Activated T-helper 2 cell treated with anti-CD3 and anti-CD28 coated beads, Interferon-gamma antibody, Interleukin-2, Interleukin-4, amounts not matched to agents 10 μg/mL and 5 μg/mL and 100 μg/mL, durations not matched to agents 14 hours and 24 hours and 36 hours (primary cell): ENCODE measurements at regions of chr10 and their contacts with region 1.

Region 1: DNA sequence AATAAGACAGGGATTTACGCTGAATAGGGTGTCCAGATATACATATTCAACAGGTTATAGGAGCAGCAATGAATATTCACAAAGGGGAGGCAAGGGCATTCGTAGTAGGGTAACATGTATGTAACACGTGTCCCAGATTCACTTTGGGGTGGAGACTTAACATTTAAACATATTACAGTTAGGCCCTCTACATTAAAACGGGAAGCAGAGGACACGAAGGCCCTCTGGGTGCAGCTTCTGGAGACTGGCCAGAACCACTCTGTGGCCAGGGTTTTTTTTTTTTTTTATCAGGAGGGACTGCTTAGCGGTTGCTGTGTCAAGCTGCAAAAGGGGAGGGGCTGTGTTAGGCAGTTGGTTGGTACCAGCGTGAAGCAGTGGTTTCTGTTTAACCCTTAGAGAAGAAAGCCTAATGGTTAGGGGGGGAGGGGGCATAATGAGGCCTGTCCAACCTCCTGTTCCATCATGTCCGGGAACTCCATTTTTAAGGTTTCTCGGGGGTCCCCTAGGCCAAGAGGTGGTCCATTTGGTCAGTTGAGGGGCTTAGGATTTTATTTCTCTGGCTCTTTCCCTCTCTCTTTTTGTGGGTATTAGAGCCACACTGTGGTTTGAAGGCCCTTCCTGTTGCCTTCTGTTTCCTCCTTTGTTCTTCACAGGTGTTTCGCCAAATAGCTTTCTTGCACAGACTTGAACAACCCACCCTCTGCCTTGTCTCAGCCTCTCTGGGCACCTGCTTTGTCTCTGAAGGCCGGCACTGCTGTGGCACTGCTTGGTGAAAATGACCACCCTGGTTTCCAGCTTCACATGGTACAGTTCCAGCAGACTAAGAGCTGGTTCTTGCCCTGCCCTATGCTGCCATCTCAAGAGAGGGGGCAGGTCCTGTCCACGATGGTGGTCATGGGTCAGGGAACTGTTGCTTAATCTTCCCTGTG is 26.4 kb downstream of the PRF1 start:
- DNase-seq: no peak
- H3K4me3 Mint-ChIP-seq: no peak overlapping the region
- H3K27ac Mint-ChIP-seq: peak overlapping the region; percentile 93
- H3K4me1 Mint-ChIP-seq: peaks cover 47% of the 10 kb centered on the region
- H3K27me3 Mint-ChIP-seq: peaks cover 7% of the 10 kb centered on the region

Region 2: DNA sequence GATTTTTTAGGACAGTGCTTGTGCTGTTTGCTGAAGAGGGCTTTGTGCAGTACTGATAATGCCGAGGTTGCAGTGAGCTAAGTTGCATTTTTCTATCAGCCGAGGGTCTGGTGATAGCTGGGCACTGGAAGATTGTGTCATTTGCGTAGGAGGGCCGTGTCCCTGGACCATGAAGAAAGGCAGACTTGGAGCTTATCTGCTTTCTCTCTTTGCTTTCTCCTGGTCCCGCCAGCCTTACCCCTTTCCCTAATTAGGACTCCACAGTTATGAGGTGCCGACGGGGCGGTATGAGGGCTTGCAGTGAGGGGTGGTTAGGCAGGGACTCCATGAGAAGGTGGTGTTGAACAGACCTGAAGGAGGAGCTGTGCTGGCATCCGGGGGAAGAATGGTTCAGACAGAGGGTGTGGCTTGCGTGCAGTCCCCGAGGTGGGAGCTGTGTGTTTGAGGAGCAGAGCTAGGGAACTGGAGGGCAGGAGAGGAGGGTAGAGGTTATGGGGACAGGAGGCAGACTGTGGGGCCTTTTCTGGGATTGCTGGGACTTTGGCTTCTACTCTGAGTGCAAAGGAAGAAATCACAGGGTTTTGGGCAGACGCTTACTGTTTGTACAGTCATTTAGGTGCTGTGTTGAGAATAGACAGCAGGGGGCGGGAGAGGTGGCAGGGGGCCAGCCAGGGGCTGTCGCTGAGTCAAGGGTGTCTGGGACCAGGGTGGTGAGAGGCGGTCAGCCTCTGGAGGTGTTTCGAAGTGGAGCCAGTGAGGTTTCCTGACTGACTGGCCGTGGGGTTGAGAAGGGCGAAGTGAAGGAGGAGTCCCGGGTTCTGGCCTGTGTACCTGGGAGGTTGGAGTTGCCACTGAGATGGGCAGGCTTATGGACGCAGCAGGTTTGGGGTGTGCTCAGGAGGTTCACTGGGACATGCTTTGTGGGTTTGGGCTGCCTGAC is 17.0 kb before region 1 on chr10:
- intact Hi-C with region 1: loop called (anchors 1 kb)
- DNase-seq: peak; percentile 48
- H3K4me3 Mint-ChIP-seq: peak overlapping the region; percentile 59
- H3K27ac Mint-ChIP-seq: peak overlapping the region; percentile 19
- H3K4me1 Mint-ChIP-seq: peaks cover 17% of the 10 kb centered on the region
- H3K27me3 Mint-ChIP-seq: peaks cover 11% of the 10 kb centered on the region

Region 3: GRCh38 chr10:70602665-70603448 is 26.7 kb after region 1 on chr10 and contains the start of gene PRF1:
- intact Hi-C with region 1: loop called (anchors 2 kb)
- DNase-seq: peak; percentile 71
- H3K4me3 Mint-ChIP-seq: peak within 1 kb of the TSS; percentile 93
- H3K27ac Mint-ChIP-seq: peak within 1 kb of the TSS; percentile 90
- H3K4me1 Mint-ChIP-seq: peaks cover 18% of the 10 kb centered on the region
- H3K27me3 Mint-ChIP-seq: no peaks in the 10 kb centered on the region
- total RNA-seq, gene PRF1: 67.7 and 69.6 TPM in 2 replicates

Region 4: DNA sequence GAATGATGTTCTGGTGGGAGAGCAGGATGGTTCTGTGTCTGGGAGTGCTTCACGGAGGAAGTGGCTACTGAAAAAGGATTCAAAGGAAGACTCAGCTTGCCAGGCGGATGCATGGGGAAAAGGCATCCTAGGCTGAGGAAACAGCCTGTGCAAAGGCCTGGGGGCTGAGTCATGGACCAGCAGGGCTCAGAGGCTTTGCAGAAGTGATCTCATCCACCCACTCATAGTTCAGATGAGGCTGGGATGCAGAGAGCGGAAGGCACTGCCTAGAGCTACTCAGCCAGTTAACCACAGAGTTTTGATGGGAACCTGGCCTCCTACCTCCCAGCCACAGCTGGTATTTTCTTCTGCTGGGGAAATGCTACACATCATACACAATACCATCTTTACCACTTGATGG is 80.4 kb after region 1 on chr10:
- intact Hi-C with region 1: loop called (anchors 1 kb)
- DNase-seq: no peak
- H3K4me3 Mint-ChIP-seq: peak overlapping the region; percentile 19
- H3K27ac Mint-ChIP-seq: peak overlapping the region; percentile 16
- H3K4me1 Mint-ChIP-seq: peaks cover 21% of the 10 kb centered on the region
- H3K27me3 Mint-ChIP-seq: peaks cover 11% of the 10 kb centered on the region

Region 5: DNA sequence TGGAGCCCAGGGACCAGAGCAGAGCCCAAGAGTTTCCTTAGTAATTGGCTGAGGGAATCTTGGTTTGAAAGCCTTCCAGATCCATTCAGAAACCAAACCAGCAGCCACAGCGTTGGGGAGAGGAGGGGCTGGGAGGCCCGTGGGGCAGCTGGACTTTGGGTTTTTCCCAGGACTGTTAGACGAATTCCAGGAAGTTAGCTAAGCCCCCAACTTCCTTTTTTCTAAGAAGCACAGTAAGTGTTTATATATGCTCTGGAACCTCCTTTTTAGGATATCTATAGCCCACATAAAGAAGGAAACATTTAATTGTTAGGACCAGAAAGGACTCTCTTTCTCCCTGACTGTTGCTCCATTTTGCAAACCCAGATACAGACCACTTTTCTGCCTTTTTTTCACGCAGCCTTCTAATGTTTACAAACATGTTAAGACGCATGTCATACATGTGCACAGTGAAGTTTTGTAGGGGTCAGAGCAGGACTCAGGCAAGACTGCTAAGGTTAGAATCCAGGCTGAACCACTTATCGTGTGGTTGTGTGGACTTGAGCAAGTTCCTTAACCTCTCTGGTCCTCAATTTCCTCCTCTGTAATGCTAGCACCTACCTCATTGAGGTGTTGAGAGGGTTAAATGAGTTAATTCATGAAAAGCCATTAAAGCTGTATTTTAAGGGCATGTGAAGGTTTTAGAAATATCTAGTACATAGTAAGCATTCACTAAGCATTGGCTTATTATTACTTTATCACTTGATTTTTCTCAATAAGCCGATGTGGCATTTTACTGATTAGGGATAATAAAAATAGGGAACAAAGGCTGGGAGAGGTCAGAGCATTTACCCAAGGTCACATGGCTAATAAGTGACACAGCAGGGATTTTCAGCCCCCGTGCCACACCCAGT is 166.6 kb after region 1 on chr10:
- intact Hi-C with region 1: no loop called
- DNase-seq: no peak
- H3K4me3 Mint-ChIP-seq: no peak overlapping the region
- H3K27ac Mint-ChIP-seq: peak overlapping the region; percentile 64
- H3K4me1 Mint-ChIP-seq: peaks cover 9% of the 10 kb centered on the region
- H3K27me3 Mint-ChIP-seq: peaks cover 2% of the 10 kb centered on the region

Region 6: GRCh38 chr10:70832852-70833528 is 256.9 kb after region 1 on chr10:
- intact Hi-C with region 1: loop called (anchors 2 kb)
- DNase-seq: no peak
- H3K4me3 Mint-ChIP-seq: peak overlapping the region; percentile 47
- H3K27ac Mint-ChIP-seq: peak overlapping the region; percentile 87
- H3K4me1 Mint-ChIP-seq: peaks cover 66% of the 10 kb centered on the region
- H3K27me3 Mint-ChIP-seq: no peaks in the 10 kb centered on the region